AG04450 (cell line): ENCODE measurements at regions of chr3 and their contacts with region 1.

Region 1: GRCh38 chr3:185659942-185660921 is 74.1 kb downstream of the SENP2 start:
- DNase-seq: peak; percentile 64
- H3K4me3 ChIP-seq: no peak overlapping the region
- H3K27ac ChIP-seq: peak overlapping the region; percentile 47
- H3K27me3 ChIP-seq: no peaks in the 10 kb centered on the region
- CTCF ChIP-seq: peak; percentile 99

Region 2: GRCh38 chr3:185316738-185317407 is 343.4 kb before region 1 on chr3:
- CTCF ChIA-PET with region 1: no interaction called
- POLR2A ChIA-PET with region 1: no interaction called
- DNase-seq: no peak
- H3K4me3 ChIP-seq: no peak overlapping the region
- H3K27ac ChIP-seq: no peak overlapping the region
- H3K27me3 ChIP-seq: no peaks in the 10 kb centered on the region
- CTCF ChIP-seq: no peak

Region 3: GRCh38 chr3:185649414-185649813 is 10.8 kb before region 1 on chr3:
- CTCF ChIA-PET with region 1: interaction called, 18 read pairs
- POLR2A ChIA-PET with region 1: interaction called, 5 read pairs
- DNase-seq: no peak
- H3K4me3 ChIP-seq: no peak overlapping the region
- H3K27ac ChIP-seq: no peak overlapping the region
- H3K27me3 ChIP-seq: no peaks in the 10 kb centered on the region
- CTCF ChIP-seq: no peak

Region 4: GRCh38 chr3:185711255-185711870 is 51.1 kb after region 1 on chr3:
- CTCF ChIA-PET with region 1: interaction called, 11 read pairs
- POLR2A ChIA-PET with region 1: no interaction called
- DNase-seq: no peak
- H3K4me3 ChIP-seq: no peak overlapping the region
- H3K27ac ChIP-seq: peak overlapping the region; percentile 54
- H3K27me3 ChIP-seq: no peaks in the 10 kb centered on the region
- CTCF ChIP-seq: no peak

Region 5: DNA sequence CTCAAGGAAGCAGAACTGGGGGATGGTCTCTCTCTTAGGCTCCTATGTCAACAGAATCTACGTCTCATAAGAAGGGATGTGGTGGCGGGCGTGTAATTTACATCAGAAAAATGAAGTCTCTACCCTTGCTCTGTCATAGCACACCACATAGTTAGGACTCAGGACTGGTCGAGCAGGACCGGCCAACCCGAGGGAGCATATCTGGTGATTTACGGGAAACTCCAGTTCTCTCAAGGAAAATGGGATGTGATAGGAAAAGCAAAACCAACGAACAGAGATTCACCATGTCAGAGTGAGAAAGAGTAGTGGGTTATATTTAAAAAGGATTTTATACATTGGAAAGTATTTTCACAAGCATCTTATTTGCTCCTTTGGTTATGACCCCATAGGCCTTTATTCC is 109.9 kb after region 1 on chr3:
- CTCF ChIA-PET with region 1: interaction called, 38 read pairs
- POLR2A ChIA-PET with region 1: interaction called, 6 read pairs
- DNase-seq: no peak
- H3K4me3 ChIP-seq: no peak overlapping the region
- H3K27ac ChIP-seq: no peak overlapping the region
- H3K27me3 ChIP-seq: no peaks in the 10 kb centered on the region
- CTCF ChIP-seq: no peak

Region 6: DNA sequence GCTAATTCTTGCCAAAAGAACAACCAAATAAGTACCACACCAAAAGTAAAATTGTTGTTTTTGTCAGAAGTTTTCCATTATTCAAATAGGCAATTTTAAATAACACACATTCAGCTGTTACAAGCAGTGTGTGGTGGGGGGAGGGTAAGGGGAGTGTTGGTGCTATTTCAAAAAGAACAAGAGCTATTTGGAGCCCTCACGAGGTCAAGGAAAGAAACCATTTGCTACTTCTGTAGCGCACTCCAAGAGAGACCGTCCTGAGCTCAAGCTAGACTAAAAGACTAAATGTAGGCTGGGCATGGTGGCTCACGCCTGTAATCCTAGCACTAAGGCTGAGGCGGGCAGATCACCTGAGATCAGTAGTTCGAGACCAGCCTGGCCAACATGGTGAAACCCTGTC is 185.8 kb after region 1 on chr3:
- CTCF ChIA-PET with region 1: interaction called, 12 read pairs
- POLR2A ChIA-PET with region 1: no interaction called
- DNase-seq: no peak
- H3K4me3 ChIP-seq: no peak overlapping the region
- H3K27ac ChIP-seq: no peak overlapping the region
- H3K27me3 ChIP-seq: no peaks in the 10 kb centered on the region
- CTCF ChIP-seq: no peak

Region 7: GRCh38 chr3:185924375-185924774 is 264.1 kb after region 1 on chr3:
- CTCF ChIA-PET with region 1: interaction called, 99 read pairs
- POLR2A ChIA-PET with region 1: interaction called, 4 read pairs
- DNase-seq: no peak
- H3K4me3 ChIP-seq: no peak overlapping the region
- H3K27ac ChIP-seq: no peak overlapping the region
- H3K27me3 ChIP-seq: no peaks in the 10 kb centered on the region
- CTCF ChIP-seq: no peak

Region 8: GRCh38 chr3:185976977-185977678 is 316.9 kb after region 1 on chr3:
- CTCF ChIA-PET with region 1: interaction called, 15 read pairs
- POLR2A ChIA-PET with region 1: no interaction called
- DNase-seq: peak; percentile 34
- H3K4me3 ChIP-seq: no peak overlapping the region
- H3K27ac ChIP-seq: no peak overlapping the region
- H3K27me3 ChIP-seq: no peaks in the 10 kb centered on the region
- CTCF ChIP-seq: peak; percentile 95